ENCODE measurements at regions of chrX and their contacts with region 1.

Region 1: GRCh38 chrX:109886122-109886761 is 116.7 kb upstream of the TMEM164 start:
- DNase-seq: peak; percentile 15
- H3K4me3 ChIP-seq: no peak overlapping the region
- H3K27ac ChIP-seq: no peak overlapping the region
- H3K4me1 ChIP-seq: no peaks in the 10 kb centered on the region
- H3K27me3 ChIP-seq: no peaks in the 10 kb centered on the region
- CTCF ChIP-seq: peak; percentile 72

Region 2: DNA sequence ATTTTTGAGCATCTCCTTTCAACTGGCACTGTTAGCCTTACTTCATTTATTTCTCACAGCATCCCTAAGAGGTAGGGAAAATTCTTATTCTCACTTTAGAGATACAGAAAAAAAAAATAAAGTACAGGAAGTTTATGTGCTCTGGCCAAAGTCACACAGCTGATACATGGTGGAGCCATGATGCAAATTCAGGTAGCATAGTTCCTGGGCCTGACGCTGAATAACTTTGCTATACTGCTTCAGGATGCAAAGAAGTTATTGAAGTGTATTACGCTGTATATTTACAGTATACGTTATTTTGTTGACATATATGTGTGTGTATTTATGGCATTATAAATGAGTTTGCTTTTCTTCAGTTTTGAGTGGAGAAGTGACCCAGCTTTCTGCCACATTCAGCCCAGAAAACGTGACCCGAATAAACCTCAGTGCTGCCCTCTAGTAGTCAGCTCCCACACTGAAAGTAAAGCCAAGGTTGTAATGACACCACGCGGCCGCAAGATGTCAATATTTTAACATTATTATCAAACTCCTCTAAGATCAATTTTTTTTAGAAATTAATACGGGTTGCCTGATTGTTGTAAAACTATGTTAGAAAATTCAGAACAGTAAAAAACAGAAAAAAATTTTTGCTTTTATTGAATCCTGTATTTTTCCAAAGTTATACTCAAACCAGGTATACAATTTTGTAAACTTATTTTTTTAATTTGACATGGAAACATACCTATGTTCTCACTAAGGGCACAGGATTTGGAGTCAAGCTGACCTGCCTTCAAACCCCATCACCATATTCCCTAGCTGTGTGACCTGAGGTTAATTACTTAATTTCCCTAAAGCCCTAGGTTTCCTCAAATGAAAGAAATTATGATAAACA is 400.5 kb before region 1 on chrX:
- intact Hi-C with region 1: loop called (anchors 10 kb)
- DNase-seq: peak; percentile 20
- H3K4me3 ChIP-seq: no peak overlapping the region
- H3K27ac ChIP-seq: no peak overlapping the region
- H3K4me1 ChIP-seq: no peaks in the 10 kb centered on the region
- H3K27me3 ChIP-seq: no peaks in the 10 kb centered on the region
- CTCF ChIP-seq: peak; percentile 89

Measured in left ventricle myocardium inferior (tissue), 1 donor.